Ovary (tissue), 10 donors: ENCODE measurements at regions of chr16 and their contacts with region 1.

Region 1: DNA sequence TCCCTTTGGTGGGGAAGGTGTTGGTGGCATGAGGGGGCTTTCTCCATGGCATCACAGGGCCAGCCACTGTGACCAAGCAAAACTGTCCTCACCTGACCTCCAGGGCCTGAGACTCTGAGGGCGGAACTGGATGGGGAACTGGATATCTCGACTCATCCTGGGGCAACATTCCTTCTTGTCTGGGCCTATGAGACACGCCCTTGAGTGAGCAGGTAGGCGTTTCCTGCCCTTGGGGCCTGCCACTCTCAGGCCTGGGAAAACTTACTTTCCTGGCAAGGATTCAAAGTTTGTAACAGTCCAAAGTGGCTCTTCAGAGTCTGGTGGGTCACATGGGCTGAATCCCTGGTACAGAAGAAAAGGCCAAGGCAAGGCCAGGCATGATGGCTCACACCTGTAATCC is 9.6 kb downstream of the MT1X start:
- DNase-seq: no peak
- H3K4me3 ChIP-seq: no peak overlapping the region
- H3K27ac ChIP-seq: no peak overlapping the region
- H3K4me1 ChIP-seq: peaks cover 3% of the 10 kb centered on the region
- H3K27me3 ChIP-seq: no peaks in the 10 kb centered on the region
- CTCF ChIP-seq: no peak
- EP300 ChIP-seq: no peak
- POLR2A ChIP-seq: no peak

Region 2: DNA sequence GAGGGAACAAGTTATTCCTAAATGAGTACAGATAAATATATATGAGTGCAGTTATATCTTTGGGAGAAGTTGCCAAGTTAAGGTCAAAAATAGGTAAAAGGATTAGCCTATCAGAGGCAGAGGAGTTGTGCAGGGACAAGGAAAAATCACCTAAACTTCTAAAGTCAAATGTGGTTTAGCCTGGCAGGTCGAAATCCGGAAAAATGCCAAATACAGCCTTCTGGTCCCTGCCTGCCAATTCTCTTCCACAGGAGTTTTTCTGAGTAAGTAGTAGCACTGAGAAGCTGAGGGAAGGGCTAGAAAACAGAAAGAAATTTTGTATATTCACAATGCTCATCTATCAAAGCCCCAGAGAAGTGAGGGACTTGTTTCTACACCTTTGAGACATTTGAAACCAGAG is 799.1 kb before region 1 on chr16:
- intact Hi-C with region 1: loop called in 1 of 4 experiments (anchors 5 kb)
- DNase-seq: no peak
- H3K4me3 ChIP-seq: no peak overlapping the region
- H3K27ac ChIP-seq: no peak overlapping the region
- H3K4me1 ChIP-seq: no peaks in the 10 kb centered on the region
- H3K27me3 ChIP-seq: no peaks in the 10 kb centered on the region
- CTCF ChIP-seq: no peak
- EP300 ChIP-seq: no peak
- POLR2A ChIP-seq: no peak

Region 3: DNA sequence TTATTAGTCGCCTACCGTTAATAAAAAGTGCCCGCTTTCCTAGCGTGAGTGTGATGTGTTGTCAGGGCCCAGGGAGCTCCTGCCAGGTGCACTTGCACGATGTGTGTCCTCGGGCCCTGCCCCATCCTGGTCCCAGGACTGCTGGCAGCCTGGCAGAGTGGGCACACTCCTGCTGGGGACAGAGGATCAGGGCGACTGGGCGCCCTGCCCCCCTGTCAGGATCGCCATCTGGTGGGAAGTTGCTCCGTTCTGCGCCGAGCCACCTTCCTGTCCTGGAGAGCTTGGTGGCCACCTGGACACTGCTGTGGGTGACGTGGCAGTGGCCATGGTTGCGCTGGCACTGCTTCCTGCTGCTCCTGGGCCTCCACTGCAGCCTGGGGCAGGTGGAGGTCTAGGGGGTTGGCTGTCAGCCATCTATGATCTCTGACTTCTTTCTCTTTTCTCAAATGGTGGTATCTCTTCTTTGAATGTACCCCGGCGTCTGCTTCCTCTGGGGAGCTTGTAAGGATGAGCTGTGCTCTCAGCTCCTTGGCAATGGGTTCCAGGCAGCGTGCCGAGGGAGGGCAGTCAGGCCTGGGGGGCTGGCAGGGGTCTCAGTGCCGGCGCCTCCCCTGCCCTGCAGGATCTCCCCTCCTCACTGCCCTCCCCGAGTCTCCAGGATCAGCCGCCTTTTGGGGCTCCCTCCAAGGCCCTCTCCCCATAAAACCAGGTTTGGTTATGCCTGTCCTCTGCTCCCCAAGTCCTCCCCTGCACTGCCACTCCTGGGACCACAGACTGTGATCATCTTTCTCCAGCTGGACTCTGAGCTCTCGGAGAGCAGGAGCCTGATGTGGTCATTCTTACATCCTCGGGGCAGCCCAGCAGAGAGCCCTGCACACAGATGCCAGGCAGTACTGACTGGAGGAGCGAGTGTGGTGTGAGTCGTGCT is 343.5 kb before region 1 on chr16:
- intact Hi-C with region 1: loop called in 1 of 4 experiments (anchors 10 kb)
- DNase-seq: no peak
- H3K4me3 ChIP-seq: no peak overlapping the region
- H3K27ac ChIP-seq: no peak overlapping the region
- H3K4me1 ChIP-seq: no peaks in the 10 kb centered on the region
- H3K27me3 ChIP-seq: no peaks in the 10 kb centered on the region
- CTCF ChIP-seq: no peak
- EP300 ChIP-seq: no peak
- POLR2A ChIP-seq: no peak

Region 4: GRCh38 chr16:56600398-56600999 is 91.4 kb before region 1 on chr16:
- intact Hi-C with region 1: no loop called
- DNase-seq: peak in 1 of 5 donors; percentile 48
- H3K4me3 ChIP-seq: no peak overlapping the region
- H3K27ac ChIP-seq: no peak overlapping the region
- H3K4me1 ChIP-seq: no peaks in the 10 kb centered on the region
- H3K27me3 ChIP-seq: no peaks in the 10 kb centered on the region
- CTCF ChIP-seq: peak in 1 of 3 donors; percentile 54
- EP300 ChIP-seq: no peak
- POLR2A ChIP-seq: no peak

Region 5: GRCh38 chr16:56767024-56767423 is 75.1 kb after region 1 on chr16:
- intact Hi-C with region 1: no loop called
- DNase-seq: no peak
- H3K4me3 ChIP-seq: no peak overlapping the region
- H3K27ac ChIP-seq: no peak overlapping the region
- H3K4me1 ChIP-seq: peaks cover 3% of the 10 kb centered on the region
- H3K27me3 ChIP-seq: no peaks in the 10 kb centered on the region
- CTCF ChIP-seq: no peak
- EP300 ChIP-seq: no peak
- POLR2A ChIP-seq: no peak

Region 6: DNA sequence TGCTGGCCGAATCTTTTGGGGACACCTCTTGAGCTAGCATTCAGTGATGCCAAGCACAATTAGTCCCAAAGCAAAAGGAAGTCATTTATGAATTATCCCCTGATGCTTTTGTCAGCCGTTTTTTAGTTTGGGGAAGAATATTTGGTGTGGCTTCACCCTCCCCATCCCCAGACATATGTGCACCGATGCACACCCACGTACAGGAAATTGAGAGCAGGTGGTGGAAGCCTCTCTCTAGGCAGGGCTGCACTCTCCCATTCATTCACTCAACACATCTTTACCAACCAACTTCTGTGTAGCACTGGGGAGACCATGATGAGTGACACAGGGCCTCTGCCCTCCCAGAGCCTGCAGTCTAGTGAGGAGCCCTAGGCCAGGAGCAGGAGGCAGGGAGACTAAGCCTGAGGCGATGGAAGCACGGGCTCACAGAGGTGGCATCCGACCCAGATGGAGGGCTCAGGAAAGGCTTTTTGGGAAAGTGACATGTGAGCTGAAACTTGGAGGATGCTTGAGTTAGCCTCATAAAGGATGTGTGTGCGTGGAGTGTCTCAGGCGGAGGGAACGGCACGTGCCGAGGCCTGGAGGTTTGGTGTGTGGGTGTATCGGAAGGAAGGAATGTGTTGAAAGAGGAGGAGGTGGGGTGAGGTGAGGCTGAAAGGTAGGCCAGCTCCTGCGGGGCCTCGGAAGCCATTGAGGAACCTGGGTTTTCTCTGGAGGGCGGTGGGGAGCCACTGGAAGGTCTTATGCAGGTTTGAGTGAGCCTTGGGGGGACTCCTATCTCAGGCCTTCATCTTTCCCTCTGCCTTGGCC is 450.1 kb after region 1 on chr16:
- intact Hi-C with region 1: no loop called
- DNase-seq: peak in 2 of 5 donors; percentile 5 to 8
- H3K4me3 ChIP-seq: no peak overlapping the region
- H3K27ac ChIP-seq: no peak overlapping the region
- H3K4me1 ChIP-seq: no peaks in the 10 kb centered on the region
- H3K27me3 ChIP-seq: no peaks in the 10 kb centered on the region
- CTCF ChIP-seq: no peak
- EP300 ChIP-seq: no peak
- POLR2A ChIP-seq: no peak